WTC11 (cell line): ENCODE measurements at regions of chr11 and their contacts with region 1.

Region 1: DNA sequence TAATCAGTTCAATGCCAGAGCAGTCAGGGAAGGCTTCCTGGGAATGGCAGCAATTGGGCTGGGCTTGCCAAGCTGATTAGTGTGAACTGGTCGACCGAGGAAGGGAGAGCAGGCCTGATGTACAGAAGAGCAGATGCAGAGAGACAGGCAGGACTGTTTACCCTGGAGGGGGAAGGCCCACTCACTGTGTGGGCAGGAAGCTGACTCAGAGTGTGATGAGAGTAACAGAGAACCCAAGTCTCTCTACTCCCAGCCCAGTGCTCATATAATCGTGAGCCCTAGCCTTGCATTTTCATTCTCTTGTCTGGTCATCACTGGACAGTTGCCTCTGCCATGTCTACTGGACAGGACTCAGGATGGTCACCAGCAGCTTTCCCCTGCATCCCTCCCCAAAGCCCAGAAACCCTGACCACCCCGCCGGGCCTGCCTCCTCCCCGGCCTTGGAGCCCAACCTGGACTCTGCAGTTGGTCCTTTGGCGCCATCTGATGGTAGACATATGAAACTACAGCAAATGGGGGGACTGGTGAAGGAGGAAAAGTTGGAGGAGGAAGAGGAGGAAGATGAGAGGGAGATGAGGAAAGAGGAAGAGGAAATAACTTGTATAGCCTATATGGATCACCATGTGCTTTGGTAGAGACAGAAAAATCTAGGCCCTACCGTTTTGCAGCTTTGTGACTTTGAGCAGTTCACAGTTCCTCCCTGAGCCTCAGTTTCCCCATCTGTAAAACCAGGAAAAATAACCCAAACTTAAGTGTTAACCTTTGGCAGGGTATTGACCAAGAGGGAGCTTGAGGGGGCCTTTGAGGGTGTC is 43.4 kb upstream of the PRDM11 start:
- DNase-seq: peak; percentile 68
- ATAC-seq: peak; percentile 31
- H3K4me3 Mint-ChIP-seq: no peak overlapping the region
- H3K27ac Mint-ChIP-seq: no peak overlapping the region
- H3K4me1 Mint-ChIP-seq: peaks cover 11% of the 10 kb centered on the region
- H3K27me3 Mint-ChIP-seq: 0 out of 2 replicates have a peak, but pooled peaks cover 3% of the 10 kb centered on the region
- CTCF ChIP-seq: peak; percentile 88

Region 2: DNA sequence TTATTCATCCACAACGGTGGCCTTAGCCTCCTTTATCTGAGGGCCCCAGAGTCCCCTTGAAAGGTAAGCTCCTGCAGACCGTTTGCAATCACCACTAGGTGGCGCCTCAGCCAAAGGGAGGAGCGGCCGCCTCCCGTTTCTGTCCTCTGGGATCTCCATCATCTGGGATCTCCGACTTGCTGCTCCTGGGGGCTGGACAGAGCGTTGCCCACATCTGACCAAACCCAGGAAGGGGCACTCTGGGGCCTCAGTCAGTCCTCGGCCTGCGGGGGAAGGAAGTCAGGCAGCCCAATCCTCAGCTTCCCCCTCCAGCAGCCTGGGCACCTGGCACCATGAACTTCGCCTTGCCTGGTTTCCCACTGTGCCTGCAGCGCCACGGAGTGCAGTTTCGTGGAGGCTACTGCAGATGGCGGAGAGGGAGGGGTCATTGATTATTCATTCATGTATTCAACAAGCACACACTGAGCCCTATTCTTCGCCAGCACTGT is 175.8 kb before region 1 on chr11:
- CTCF ChIA-PET with region 1: interaction called, 221 read pairs
- POLR2A ChIA-PET with region 1: interaction called, 10 read pairs
- DNase-seq: peak; percentile 89
- ATAC-seq: peak; percentile 68
- H3K4me3 Mint-ChIP-seq: no peak overlapping the region
- H3K27ac Mint-ChIP-seq: no peak overlapping the region; the same call in 1 of the 2 replicates
- H3K4me1 Mint-ChIP-seq: peaks cover 28% of the 10 kb centered on the region
- H3K27me3 Mint-ChIP-seq: no peaks in the 10 kb centered on the region; the same call in 1 of the 2 replicates
- CTCF ChIP-seq: peak; percentile 86

Region 3: DNA sequence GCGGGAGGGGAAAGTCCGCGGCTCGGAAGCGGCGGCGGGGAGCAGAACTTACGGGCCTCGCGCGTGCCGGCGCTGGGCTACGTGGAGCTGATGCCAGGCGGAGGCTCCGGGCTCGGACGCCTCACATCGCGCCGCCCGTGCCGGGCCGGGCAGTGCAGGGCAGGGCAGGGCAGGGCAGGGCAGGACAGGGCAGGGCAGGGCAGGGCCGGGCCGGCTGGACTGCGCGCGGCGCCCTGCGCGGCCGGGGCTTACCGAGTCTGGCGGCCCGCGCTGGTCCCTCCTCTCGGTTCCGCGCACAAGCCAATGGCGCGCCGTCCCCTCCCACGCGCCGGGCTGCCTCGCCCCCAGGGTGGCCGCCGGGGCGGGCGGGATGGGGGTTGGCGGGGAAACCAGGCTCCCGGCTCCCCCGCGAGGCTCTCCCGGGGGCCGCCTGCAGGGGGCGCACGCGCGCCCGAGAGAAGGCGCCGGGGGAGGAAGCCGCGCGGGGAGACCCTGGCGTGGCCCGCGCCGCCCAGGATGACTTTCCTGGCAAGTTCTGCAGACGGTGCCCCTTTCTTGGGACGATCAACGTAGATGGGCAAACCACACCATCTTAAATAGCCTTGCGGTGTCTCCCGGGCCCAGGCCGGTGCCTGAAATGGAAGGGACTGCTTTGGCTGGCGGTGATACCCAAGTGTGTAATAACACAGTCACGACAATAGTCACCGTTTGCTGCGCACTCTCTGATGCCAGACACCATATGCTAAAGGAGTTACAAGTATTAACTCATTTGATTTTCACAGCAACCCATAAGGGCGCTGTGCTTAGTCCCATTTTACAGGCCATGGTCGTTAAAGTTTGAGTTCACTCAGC is 152.2 kb before region 1 on chr11 and contains the start of gene TP53I11:
- CTCF ChIA-PET with region 1: interaction called, 18 read pairs
- POLR2A ChIA-PET with region 1: no interaction called
- DNase-seq: peak; percentile 43
- ATAC-seq: peak; percentile 19
- H3K4me3 Mint-ChIP-seq: peak within 1 kb of the TSS; percentile 85
- H3K27ac Mint-ChIP-seq: no peak within 1 kb of the TSS
- H3K4me1 Mint-ChIP-seq: peaks cover 58% of the 10 kb centered on the region
- H3K27me3 Mint-ChIP-seq: peaks cover 3% of the 10 kb centered on the region
- CTCF ChIP-seq: peak; percentile 87
- total RNA-seq, gene TP53I11: 42.4 to 44.2 TPM (median 42.9 TPM) in 3 replicates

Region 4: DNA sequence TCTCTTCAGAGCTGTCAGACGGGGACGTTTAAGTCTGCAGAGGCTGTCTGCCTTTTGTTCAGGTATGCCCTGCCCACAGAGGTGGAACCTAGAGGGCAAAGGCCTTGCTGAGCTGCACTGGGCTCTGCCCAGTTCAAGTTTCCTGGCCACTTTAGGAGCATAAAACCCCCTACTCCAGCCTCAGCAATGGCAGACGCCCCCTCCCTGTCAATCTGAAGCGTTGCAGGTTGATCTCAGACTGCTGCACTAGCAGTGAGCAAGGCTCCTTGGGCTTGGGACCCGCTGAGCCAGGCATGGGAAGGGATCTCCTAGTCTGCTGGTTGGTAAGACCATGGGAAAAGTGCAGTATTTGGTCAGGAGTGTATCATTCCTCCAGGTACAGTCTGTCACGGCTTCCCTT is 85.7 kb before region 1 on chr11:
- CTCF ChIA-PET with region 1: interaction called, 22 read pairs
- POLR2A ChIA-PET with region 1: no interaction called
- DNase-seq: peak; percentile 52
- ATAC-seq: peak; percentile 91
- H3K4me3 Mint-ChIP-seq: no peak overlapping the region
- H3K27ac Mint-ChIP-seq: no peak overlapping the region
- H3K4me1 Mint-ChIP-seq: peaks cover 21% of the 10 kb centered on the region
- H3K27me3 Mint-ChIP-seq: peaks cover 24% of the 10 kb centered on the region
- CTCF ChIP-seq: peak; percentile 43; the same call in 1 of the 2 replicates

Region 5: GRCh38 chr11:45062971-45063611 is 39.9 kb before region 1 on chr11:
- CTCF ChIA-PET with region 1: no interaction called
- POLR2A ChIA-PET with region 1: no interaction called
- DNase-seq: no peak
- ATAC-seq: no peak
- H3K4me3 Mint-ChIP-seq: no peak overlapping the region
- H3K27ac Mint-ChIP-seq: no peak overlapping the region
- H3K4me1 Mint-ChIP-seq: peaks cover 5% of the 10 kb centered on the region; the same call in 1 of the 2 replicates
- H3K27me3 Mint-ChIP-seq: peaks cover 7% of the 10 kb centered on the region; the same call in 1 of the 2 replicates
- CTCF ChIP-seq: no peak

Region 6: DNA sequence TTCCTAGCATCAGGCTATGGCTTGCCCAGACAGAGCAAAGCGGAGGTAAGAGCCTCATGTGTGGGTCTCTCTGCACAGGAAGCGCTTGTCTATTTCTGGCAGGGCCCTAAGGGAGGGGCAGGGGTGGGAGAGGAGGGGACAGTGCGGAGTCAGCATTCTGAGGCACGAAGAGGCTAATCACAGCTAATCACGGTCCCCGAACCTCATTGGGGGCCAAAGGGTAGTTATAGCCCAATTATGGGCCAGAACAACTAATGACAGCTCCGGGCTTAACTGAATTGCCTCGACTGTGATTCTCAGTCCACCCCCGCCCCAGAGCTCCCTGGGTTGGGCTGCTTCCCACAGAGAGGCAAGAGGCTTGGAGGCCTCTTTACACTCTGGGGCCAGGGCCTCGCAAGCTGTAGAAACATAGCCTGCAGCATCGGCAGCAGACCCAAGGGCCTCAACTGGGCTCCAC is 29.3 kb before region 1 on chr11:
- CTCF ChIA-PET with region 1: interaction called, 11 read pairs
- POLR2A ChIA-PET with region 1: no interaction called
- DNase-seq: no peak
- ATAC-seq: no peak; the same call in 1 of the 2 replicates
- H3K4me3 Mint-ChIP-seq: no peak overlapping the region
- H3K27ac Mint-ChIP-seq: no peak overlapping the region
- H3K4me1 Mint-ChIP-seq: peaks cover 5% of the 10 kb centered on the region
- H3K27me3 Mint-ChIP-seq: no peaks in the 10 kb centered on the region
- CTCF ChIP-seq: no peak

Region 7: DNA sequence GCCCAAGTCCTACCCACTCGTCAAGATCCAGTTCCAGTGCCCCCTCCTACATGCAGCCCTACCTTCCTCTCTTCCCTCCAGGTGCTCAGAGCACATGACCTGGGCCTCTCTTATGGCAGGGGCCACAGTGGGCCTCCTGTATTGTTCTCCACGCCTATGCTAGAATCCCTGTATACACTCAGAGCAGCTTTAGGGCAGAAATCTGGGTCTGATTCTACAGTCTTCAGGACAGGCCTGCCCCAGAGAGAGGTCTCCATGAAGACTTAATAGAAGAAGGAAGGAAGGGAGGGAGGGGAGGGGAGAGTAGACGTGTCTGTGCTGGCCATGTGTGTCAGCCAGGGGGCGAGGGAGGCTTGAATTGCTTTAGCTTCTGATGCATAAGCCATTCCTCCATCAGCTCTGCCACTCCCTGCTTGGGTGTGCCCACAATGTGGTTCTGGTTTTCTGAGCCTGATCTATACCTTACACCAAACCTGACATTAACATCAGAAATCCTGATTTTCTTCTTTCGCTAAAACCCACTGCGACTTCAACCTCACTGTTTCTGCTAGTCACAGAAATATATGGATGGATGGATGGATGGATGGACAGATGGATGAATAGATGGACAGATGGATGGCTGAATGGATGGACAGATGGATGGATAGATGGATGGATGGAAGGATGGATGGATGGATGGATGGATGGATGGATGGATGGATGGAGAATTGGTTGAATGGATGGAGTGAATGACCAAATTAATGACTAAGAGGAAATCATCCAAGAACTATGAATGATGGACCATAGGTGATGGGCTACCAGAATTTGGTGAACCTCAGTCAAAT is 13.1 kb before region 1 on chr11:
- CTCF ChIA-PET with region 1: interaction called, 25 read pairs
- POLR2A ChIA-PET with region 1: no interaction called
- DNase-seq: peak; percentile 49
- ATAC-seq: peak; percentile 16
- H3K4me3 Mint-ChIP-seq: no peak overlapping the region
- H3K27ac Mint-ChIP-seq: no peak overlapping the region; the same call in 1 of the 2 replicates
- H3K4me1 Mint-ChIP-seq: peaks cover 84% of the 10 kb centered on the region
- H3K27me3 Mint-ChIP-seq: no peaks in the 10 kb centered on the region; the same call in none of the 2 replicates
- CTCF ChIP-seq: no peak

Region 8: GRCh38 chr11:45133871-45134270 is 30.9 kb after region 1 on chr11:
- CTCF ChIA-PET with region 1: no interaction called
- POLR2A ChIA-PET with region 1: no interaction called
- DNase-seq: no peak
- ATAC-seq: no peak
- H3K4me3 Mint-ChIP-seq: no peak overlapping the region
- H3K27ac Mint-ChIP-seq: no peak overlapping the region
- H3K4me1 Mint-ChIP-seq: no peaks in the 10 kb centered on the region
- H3K27me3 Mint-ChIP-seq: peaks cover 65% of the 10 kb centered on the region
- CTCF ChIP-seq: no peak